HepG2 (cell line): ENCODE measurements at regions of chr2 and their contacts with region 1.

Region 1: GRCh38 chr2:121034551-121034950 is 250.5 kb downstream of the TFCP2L1 start:
- DNase-seq: no peak
- ATAC-seq: no peak
- H3K4me3 ChIP-seq: no peak overlapping the region
- H3K27ac ChIP-seq: no peak overlapping the region
- H3K4me1 ChIP-seq: peaks cover 12% of the 10 kb centered on the region
- H3K27me3 ChIP-seq: peaks cover 4 to 90% of the 10 kb centered on the region in 2 experiments; a peak in 4 of 5 replicates
- CTCF ChIP-seq: no peak
- EP300 ChIP-seq: no peak
- POLR2A ChIP-seq: no peak
- RAD21 ChIP-seq: no peak

Region 2: DNA sequence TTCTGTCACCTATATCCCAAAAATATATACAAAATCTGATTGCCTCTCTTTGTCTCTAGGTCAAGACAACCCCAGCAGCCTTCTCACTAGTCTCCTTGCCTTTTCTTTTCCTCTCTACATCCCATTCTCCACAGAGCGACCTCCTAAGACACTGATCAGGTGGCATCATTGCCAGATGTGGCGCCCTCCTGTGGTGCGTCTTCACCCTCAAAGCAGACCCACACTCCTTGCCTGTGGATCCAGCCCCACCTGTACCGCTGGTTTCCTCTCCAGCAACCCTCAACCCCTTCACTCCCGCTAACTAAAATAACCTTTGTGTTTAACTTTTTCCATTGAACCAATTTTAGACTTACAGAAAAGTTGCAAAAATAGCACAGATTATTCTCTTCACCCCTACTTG is 25.6 kb before region 1 on chr2:
- CTCF ChIA-PET with region 1: no interaction called
- POLR2A ChIA-PET with region 1: no interaction called
- in situ Hi-C with region 1: no loop called
- intact Hi-C with region 1: loop called (anchors 1 kb)
- DNase-seq: no peak
- ATAC-seq: peak; percentile 76
- H3K4me3 ChIP-seq: no peak overlapping the region
- H3K27ac ChIP-seq: no peak overlapping the region
- H3K4me1 ChIP-seq: no peaks in the 10 kb centered on the region
- H3K27me3 ChIP-seq: peaks cover 2 to 13% of the 10 kb centered on the region in 2 experiments; a peak in 2 of 5 replicates
- CTCF ChIP-seq: peak; percentile 51
- EP300 ChIP-seq: no peak
- POLR2A ChIP-seq: no peak
- RAD21 ChIP-seq: no peak

Region 3: DNA sequence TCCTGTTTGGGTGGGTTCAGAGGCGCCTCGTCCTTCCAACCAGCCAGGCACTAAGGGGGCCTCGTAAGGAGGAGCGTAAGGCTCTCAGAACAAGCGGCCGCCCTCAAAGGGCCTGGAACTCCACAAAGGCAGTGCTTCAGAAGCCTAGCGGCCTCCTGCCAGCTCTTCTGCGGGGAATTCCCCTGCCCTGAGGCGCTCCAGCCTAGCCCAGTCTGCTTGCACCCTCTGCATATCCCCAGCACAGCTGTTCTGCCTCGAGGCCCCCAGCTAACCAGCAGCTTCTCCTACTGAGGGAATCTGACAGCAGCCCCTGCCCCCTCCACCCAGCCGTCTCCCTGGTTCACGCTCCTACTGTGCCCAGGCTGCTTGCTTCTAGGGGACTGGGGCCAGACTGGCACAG is 15.5 kb before region 1 on chr2:
- CTCF ChIA-PET with region 1: no interaction called
- POLR2A ChIA-PET with region 1: no interaction called
- in situ Hi-C with region 1: no loop called
- intact Hi-C with region 1: no loop called
- DNase-seq: no peak
- ATAC-seq: 0 out of 3 replicates have a peak, but pooled peaks have one; percentile 29
- H3K4me3 ChIP-seq: no peak overlapping the region
- H3K27ac ChIP-seq: no peak overlapping the region
- H3K4me1 ChIP-seq: peaks cover 9% of the 10 kb centered on the region
- H3K27me3 ChIP-seq: peaks cover 3 to 19% of the 10 kb centered on the region in 2 experiments; a peak in 3 of 5 replicates
- CTCF ChIP-seq: no peak
- EP300 ChIP-seq: no peak
- POLR2A ChIP-seq: no peak
- RAD21 ChIP-seq: no peak